Activated CD4-positive, alpha-beta T cell treated with anti-CD3 and anti-CD28 coated beads, Interleukin-2, amount 10 ng/mL, durations not matched to agents 7 days and 5 days (primary cell): ENCODE measurements at regions of chr2 and their contacts with region 1.

Region 1: GRCh38 chr2:170928824-170929685 is at the start of gene GORASP2:
- DNase-seq: peak; percentile 99
- H3K4me3 Mint-ChIP-seq: peak within 1 kb of the TSS; percentile 86
- H3K27ac Mint-ChIP-seq: peak within 1 kb of the TSS; percentile 95
- H3K4me1 Mint-ChIP-seq: peaks cover 42% of the 10 kb centered on the region
- H3K27me3 Mint-ChIP-seq: no peaks in the 10 kb centered on the region
- total RNA-seq, gene GORASP2: 58.7 to 62.0 TPM

Region 2: DNA sequence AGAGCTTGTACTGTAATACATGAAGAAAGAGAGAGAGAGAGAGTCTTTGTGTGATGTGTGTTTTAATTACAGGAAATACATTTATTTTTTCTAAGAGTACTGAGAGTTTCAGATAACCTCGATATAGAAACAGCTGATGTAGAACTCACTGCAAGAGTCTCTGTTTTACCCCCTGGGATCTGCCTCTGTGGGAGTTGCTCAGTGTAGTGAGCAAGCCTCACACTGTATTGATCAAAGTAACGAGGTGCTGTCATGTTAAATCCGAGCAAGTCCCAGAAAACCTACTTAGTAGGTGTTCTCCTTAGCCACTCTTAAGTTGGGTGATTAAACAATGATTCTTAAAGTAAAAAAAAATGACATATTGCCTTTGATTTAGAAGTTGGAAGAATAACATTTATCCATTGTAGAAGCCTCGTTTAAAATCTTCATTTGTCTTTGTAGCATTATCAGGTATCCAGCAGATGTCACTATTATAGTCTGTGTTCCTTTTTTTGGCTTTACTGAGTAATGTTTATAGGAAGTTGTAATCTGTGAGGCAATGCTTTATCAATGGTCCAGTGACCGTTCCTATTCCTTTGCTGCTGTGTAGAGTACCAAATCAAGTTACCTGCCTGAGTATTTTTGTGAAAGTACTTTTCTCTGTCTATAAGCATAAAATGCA is 532.1 kb before region 1 on chr2:
- CTCF ChIA-PET with region 1: no interaction called
- POLR2A ChIA-PET with region 1: no interaction called
- DNase-seq: no peak
- H3K4me3 Mint-ChIP-seq: no peak overlapping the region
- H3K27ac Mint-ChIP-seq: no peak overlapping the region
- H3K4me1 Mint-ChIP-seq: peaks cover 2% of the 10 kb centered on the region
- H3K27me3 Mint-ChIP-seq: peaks cover 26% of the 10 kb centered on the region

Region 3: DNA sequence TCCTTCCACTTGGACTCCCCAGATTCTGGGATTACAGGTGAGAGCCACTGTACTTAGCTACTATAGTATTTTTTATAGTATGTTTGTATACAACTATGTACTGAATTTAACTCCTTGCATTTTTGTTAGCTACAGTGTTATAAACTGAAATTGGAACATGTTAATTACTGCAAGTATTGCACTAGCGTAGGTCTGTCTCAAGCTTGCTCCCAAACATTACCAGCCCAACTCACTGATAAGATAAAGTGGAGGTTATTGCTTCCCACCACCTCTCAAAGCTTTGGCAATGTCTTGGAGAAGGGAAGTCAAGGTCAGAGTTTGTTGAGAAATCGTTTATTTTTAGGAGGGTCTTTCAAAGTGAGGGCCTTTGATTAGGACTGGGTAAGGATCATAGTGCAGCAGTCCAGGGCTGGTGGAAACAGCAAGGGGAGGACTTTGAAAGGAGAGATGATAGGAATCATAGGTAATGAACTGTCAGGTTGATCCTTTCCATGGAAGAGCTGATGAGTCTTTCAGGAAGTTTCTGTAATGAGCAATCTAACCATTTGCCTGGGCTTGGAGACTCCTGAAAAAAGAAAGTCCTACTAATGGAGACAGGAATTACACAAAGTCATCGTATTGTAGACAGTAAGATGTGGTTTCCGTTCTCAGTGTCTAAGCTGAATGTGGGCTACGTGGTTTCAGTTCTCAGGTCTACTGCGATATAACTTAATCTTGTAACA is 494.0 kb before region 1 on chr2:
- CTCF ChIA-PET with region 1: no interaction called
- POLR2A ChIA-PET with region 1: no interaction called
- DNase-seq: peak; percentile 36
- H3K4me3 Mint-ChIP-seq: no peak overlapping the region
- H3K27ac Mint-ChIP-seq: no peak overlapping the region
- H3K4me1 Mint-ChIP-seq: peaks cover 20% of the 10 kb centered on the region
- H3K27me3 Mint-ChIP-seq: peaks cover 34% of the 10 kb centered on the region

Region 4: GRCh38 chr2:170878505-170878904 is 50.5 kb before region 1 on chr2:
- CTCF ChIA-PET with region 1: interaction called, 17 read pairs
- POLR2A ChIA-PET with region 1: interaction called, 4 read pairs
- DNase-seq: peak; percentile 22
- H3K4me3 Mint-ChIP-seq: peak overlapping the region; percentile 0
- H3K27ac Mint-ChIP-seq: peak overlapping the region; percentile 71
- H3K4me1 Mint-ChIP-seq: peaks cover 19% of the 10 kb centered on the region
- H3K27me3 Mint-ChIP-seq: peaks cover 22% of the 10 kb centered on the region

Region 5: DNA sequence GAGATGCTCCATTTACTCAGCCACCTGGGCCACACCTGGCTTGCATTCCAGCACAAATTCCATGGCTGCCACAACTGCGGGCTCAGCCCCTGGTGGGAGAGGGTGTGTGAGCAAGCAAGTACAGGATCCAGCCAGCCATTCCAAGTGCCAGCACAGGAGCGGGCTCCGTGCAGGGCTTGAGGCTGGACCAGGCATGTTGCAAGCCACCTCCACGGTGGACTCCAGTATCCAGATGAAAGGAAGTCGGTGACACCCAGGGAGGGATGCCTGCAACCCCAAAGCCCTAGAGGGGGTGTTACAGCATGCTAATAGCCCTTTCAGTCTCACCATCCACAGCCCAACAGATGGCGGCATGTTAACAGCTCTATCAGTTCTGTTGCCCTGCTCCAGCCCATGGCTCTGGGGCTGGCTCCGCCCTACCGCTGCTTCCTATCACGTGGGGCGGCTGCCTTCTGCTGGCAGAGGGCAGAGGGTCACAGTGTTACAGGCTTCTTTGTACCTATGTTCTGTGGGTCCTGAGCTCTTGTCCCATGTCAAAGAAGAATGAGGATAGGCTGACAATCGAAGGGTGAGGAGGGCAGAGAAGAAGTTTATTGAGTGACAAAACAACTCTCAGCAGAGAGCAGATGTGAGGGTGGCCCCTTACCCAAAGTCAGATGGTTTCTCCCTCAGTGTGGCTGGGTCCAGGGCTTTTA is 11.7 kb before region 1 on chr2:
- CTCF ChIA-PET with region 1: interaction called, 13 read pairs
- POLR2A ChIA-PET with region 1: no interaction called
- DNase-seq: no peak
- H3K4me3 Mint-ChIP-seq: no peak overlapping the region
- H3K27ac Mint-ChIP-seq: no peak overlapping the region
- H3K4me1 Mint-ChIP-seq: no peaks in the 10 kb centered on the region
- H3K27me3 Mint-ChIP-seq: no peaks in the 10 kb centered on the region

Region 6: GRCh38 chr2:170950221-170950761 is 21.2 kb after region 1 on chr2:
- CTCF ChIA-PET with region 1: interaction called, 27 read pairs
- POLR2A ChIA-PET with region 1: no interaction called
- DNase-seq: no peak
- H3K4me3 Mint-ChIP-seq: no peak overlapping the region
- H3K27ac Mint-ChIP-seq: no peak overlapping the region
- H3K4me1 Mint-ChIP-seq: peaks cover 5% of the 10 kb centered on the region
- H3K27me3 Mint-ChIP-seq: no peaks in the 10 kb centered on the region